Endothelial cell of umbilical vein (primary cell): ENCODE measurements at regions of chr1 and their contacts with region 1.

Region 1: DNA sequence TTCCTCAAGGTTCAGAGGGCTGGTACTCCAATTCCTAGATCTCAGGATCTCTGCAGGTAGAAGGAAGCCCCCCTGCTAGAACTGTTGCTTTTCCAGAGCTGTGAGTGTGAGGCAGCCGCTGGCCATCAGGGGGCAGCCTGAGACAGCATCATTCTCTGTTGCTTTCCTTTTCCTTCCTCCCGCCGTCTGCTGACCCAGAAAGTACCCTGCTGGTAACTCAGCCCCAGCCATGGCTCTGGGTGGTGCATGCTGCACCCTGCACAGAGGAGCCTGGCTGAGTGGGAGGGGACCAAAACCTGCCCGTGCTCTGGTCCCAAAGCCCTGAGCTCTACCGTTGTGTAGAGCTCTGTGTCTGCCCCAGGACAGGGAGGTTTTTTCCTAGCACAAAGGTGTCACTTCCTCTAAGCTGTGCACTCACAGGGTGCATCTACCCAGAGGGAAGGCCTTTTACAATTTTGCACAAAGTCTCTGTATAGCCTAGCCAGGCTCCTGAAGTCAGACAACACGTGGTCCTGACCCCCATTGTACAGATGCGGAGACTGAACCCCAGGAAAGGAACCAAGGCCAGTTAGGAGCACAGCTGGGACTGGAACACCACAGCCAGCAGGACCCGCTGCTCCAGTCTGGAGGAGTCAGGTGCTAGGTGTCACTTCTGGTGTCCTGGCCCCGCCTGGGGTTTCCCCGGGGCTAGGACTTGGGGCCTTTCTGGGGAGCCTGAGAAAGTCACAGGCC is 5.6 kb upstream of the FAM131C start:
- DNase-seq: peak; percentile 76
- H3K4me3 ChIP-seq: no peak overlapping the region
- H3K27ac ChIP-seq: no peak overlapping the region
- H3K4me1 ChIP-seq: peaks cover 6% of the 10 kb centered on the region
- H3K27me3 ChIP-seq: no peaks in the 10 kb centered on the region
- CTCF ChIP-seq: peak; percentile 92 to 93
- POLR2A ChIP-seq: no peak

Region 2: DNA sequence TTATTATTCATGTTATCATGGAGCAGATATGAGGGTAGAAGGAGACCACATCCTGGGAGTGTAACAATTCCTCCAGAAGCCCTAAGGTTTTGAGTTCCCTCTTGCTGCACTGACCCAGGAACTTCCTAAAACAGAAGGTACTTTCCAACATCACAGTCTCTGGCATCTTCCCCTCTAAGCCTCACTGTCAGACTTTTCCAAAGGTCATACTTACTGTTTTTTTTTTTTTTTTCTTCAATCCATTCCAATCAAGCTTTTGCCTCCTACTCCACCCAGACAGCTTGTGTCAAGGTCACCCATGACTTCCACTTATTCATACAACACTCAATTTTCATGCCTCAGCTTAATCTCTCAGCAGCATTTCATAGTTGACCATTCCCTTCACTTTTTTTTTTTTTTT is 253.3 kb before region 1 on chr1:
- CTCF ChIA-PET with region 1: no interaction called
- POLR2A ChIA-PET with region 1: no interaction called
- dilution Hi-C with region 1: no loop called
- intact Hi-C with region 1: no loop called
- DNase-seq: no peak
- H3K4me3 ChIP-seq: no peak overlapping the region
- H3K27ac ChIP-seq: no peak overlapping the region
- H3K4me1 ChIP-seq: no peaks in the 10 kb centered on the region
- H3K27me3 ChIP-seq: no peaks in the 10 kb centered on the region
- CTCF ChIP-seq: no peak
- POLR2A ChIP-seq: no peak

Region 3: DNA sequence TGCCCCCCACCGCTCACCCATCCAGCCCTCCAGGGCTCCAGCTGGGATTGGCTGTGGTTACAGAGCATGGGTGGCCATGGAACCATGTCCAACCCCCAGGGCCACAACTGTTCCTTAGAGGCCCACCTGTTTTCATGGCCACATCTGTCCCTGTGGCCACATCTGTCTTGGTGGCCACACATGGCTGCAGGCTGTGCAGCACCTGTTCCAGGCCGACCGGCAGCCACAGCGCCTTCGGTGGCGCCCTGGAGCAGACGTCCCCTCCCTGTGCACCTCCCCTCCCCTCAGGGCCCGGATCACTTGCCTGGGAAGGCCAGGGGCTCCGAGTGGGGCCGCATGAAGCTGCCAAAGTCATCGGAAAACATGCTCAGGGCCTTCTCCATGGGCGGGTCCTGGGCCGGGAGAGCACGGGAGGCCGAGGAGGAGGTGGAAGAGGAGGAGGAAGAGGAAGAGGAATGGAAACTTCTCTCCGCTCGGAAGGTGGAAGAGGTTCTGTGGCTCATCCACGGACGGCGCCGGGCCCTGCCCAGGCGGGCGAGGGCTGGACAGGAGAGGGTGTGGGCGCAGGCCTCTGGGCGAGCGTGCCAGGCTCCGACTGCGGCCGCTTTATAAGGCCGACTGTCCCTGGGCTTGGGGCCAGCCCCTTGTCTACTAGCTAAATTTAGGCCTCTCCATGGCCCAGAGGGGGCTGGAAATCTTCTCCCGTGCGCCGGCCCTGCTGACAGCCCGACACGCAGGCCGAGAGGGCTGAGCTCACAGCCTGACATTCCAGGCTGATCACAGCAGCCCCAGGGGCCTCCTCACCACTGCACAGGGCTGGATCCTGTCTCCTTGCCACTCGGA is 61.4 kb before region 1 on chr1 and contains the start of gene HSPB7:
- CTCF ChIA-PET with region 1: no interaction called
- POLR2A ChIA-PET with region 1: no interaction called
- dilution Hi-C with region 1: no loop called
- intact Hi-C with region 1: no loop called
- DNase-seq: no peak
- H3K4me3 ChIP-seq: no peak within 1 kb of the TSS
- H3K27ac ChIP-seq: no peak within 1 kb of the TSS
- H3K4me1 ChIP-seq: peaks cover under 1% of the 10 kb centered on the region
- H3K27me3 ChIP-seq: no peaks in the 10 kb centered on the region
- CTCF ChIP-seq: no peak
- POLR2A ChIP-seq: no peak
- total RNA-seq, gene HSPB7: not detected in 2 replicates

Region 4: GRCh38 chr1:16067127-16067768 is 11.8 kb before region 1 on chr1:
- CTCF ChIA-PET with region 1: interaction called, 14 read pairs
- POLR2A ChIA-PET with region 1: no interaction called
- dilution Hi-C with region 1: no loop called
- intact Hi-C with region 1: no loop called
- DNase-seq: no peak
- H3K4me3 ChIP-seq: no peak overlapping the region
- H3K27ac ChIP-seq: no peak overlapping the region
- H3K4me1 ChIP-seq: no peaks in the 10 kb centered on the region
- H3K27me3 ChIP-seq: peaks cover 0 to 7% of the 10 kb centered on the region in 2 experiments
- CTCF ChIP-seq: no peak
- POLR2A ChIP-seq: no peak

Region 5: GRCh38 chr1:16117369-16117768 is 38.3 kb after region 1 on chr1:
- CTCF ChIA-PET with region 1: interaction called, 67 read pairs
- POLR2A ChIA-PET with region 1: no interaction called
- dilution Hi-C with region 1: no loop called
- intact Hi-C with region 1: no loop called
- DNase-seq: no peak
- H3K4me3 ChIP-seq: no peak overlapping the region
- H3K27ac ChIP-seq: no peak overlapping the region
- H3K4me1 ChIP-seq: no peaks in the 10 kb centered on the region
- H3K27me3 ChIP-seq: no peaks in the 10 kb centered on the region
- CTCF ChIP-seq: no peak
- POLR2A ChIP-seq: no peak

Region 6: GRCh38 chr1:16139473-16139962 is 60.4 kb after region 1 on chr1:
- CTCF ChIA-PET with region 1: interaction called, 39 read pairs
- POLR2A ChIA-PET with region 1: no interaction called
- dilution Hi-C with region 1: no loop called
- intact Hi-C with region 1: loop called (anchors 2 kb)
- DNase-seq: peak; percentile 60
- H3K4me3 ChIP-seq: no peak overlapping the region
- H3K27ac ChIP-seq: peak overlapping the region; percentile 86
- H3K4me1 ChIP-seq: peaks cover 63% of the 10 kb centered on the region
- H3K27me3 ChIP-seq: no peaks in the 10 kb centered on the region
- CTCF ChIP-seq: no peak
- POLR2A ChIP-seq: peak; percentile 50

Region 7: GRCh38 chr1:16164213-16165072 is 85.4 kb after region 1 on chr1:
- CTCF ChIA-PET with region 1: interaction called, 13 read pairs
- POLR2A ChIA-PET with region 1: no interaction called
- dilution Hi-C with region 1: no loop called
- intact Hi-C with region 1: no loop called
- DNase-seq: peak; percentile 88
- H3K4me3 ChIP-seq: no peak overlapping the region
- H3K27ac ChIP-seq: peak overlapping the region; percentile 68
- H3K4me1 ChIP-seq: peaks cover 15% of the 10 kb centered on the region
- H3K27me3 ChIP-seq: no peaks in the 10 kb centered on the region
- CTCF ChIP-seq: no peak
- POLR2A ChIP-seq: no peak

Region 8: DNA sequence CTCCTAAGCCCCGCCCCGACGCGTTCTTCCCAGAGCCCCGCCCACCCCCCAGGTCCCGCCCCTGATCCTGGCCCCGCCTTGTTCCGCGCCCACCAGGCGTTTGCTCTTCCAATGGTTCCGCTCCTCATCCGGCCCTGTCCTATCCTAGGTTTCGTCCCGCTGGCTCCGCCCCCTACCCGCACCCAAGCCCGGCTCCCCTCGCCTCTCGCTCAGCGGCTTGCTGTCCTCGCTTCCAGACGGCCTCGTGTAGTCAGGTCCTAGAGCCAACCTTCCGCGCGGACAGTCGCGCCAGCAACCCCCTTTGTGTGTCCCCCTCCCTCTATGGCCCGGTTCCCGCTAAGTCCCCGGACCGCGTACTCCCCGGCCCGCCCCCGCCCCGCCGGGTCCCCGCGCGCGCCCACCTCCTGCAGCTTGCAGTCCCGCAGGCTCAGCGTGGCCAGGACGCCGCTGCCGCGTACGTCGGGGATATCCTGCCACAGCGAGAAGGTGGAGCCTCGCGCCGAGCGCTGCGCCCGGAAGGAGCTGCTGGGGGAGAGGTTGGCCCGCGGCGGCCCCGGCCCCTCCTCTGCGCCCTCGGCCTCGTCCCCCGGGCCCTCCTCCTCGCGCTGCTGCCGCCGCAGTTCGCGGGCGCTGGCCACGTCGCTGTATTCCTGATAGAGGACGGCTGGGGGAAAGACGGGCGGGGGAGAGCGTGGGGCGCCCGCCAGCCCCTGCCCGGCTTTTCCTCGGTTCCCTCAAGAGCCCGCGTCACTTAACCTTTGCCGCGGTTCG is 127.6 kb after region 1 on chr1:
- CTCF ChIA-PET with region 1: interaction called, 10 read pairs
- POLR2A ChIA-PET with region 1: no interaction called
- dilution Hi-C with region 1: no loop called
- intact Hi-C with region 1: no loop called
- DNase-seq: peak; percentile 98
- H3K4me3 ChIP-seq: peak overlapping the region; percentile 41 to 57 (median 50)
- H3K27ac ChIP-seq: peak overlapping the region; percentile 49
- H3K4me1 ChIP-seq: peaks cover 9% of the 10 kb centered on the region
- H3K27me3 ChIP-seq: no peaks in the 10 kb centered on the region
- CTCF ChIP-seq: no peak
- POLR2A ChIP-seq: peak; percentile 76